Prostate gland (tissue), 2 donors: ENCODE measurements at regions of chr4 and their contacts with region 1.

Region 1: DNA sequence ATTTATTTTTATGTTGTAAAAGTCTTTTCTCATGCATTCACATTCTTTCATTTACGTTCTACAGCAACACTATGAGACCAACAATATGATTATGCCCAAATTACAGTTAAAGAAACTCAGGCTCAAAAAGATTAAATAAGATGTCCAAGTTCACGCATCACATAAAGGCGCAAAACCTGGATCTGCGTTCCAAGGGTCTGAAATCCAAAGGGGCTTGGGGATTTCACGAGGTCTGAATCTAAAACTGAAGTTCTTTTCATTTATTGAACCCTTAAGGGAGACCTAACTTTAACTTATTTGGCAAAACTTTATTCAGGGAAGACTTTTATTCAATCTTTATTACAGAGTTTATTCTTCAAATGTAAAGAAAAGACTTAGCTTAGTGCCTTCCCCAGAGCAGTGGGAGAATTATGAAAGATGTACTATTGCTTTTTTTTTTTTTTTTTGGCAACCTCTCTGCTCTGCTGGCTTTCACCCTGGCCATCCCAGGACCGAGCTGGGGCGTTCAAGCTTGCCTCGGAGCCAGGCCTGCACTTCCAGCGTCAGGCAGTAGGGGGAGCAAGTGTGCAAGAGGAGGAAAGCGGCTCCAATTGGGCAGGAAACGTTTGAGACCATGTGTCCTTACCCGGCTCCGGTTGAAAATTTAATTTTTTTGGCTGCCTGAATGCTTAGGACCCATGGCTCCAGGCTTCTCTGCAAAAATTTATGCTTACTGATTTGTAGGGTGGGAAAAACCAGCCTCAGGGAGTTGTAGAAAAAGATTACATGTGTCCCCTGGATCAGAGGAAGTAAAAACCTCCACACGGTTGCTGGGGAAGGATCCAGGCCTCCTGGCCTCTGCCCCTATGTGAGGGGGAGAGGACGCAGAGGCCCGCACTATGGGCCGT is 344.3 kb upstream of the KLF3 start:
- DNase-seq: peak; percentile 92
- H3K4me3 ChIP-seq: no peak overlapping the region
- H3K27ac ChIP-seq: peak overlapping the region; percentile 70 to 77
- H3K4me1 ChIP-seq: peaks cover 2% of the 10 kb centered on the region
- H3K27me3 ChIP-seq: no peaks in the 10 kb centered on the region
- CTCF ChIP-seq: peak; percentile 95 to 96 (median 96)
- POLR2A ChIP-seq: no peak

Region 2: DNA sequence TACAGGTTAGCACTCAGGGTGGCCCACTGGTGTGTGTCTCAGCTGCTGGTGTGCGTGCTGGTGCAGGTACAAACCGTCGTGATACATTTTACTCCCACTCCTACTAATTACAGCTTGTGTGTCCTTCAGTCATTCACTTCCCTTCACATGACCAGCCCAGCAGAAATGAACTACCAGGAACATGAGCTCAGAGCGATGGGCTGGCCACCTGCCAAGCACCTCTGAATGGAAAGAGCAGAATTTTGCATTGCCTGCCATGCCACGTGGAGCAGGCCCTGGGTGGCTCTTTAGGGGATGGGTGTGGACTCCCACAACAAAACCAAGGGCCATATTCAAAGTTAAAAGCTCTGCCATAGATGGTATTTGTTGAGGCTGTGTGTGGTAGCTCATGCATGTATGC is 552.2 kb before region 1 on chr4:
- intact Hi-C with region 1: no loop called
- DNase-seq: no peak
- H3K4me3 ChIP-seq: no peak overlapping the region
- H3K27ac ChIP-seq: no peak overlapping the region
- H3K4me1 ChIP-seq: no peaks in the 10 kb centered on the region
- H3K27me3 ChIP-seq: no peaks in the 10 kb centered on the region
- CTCF ChIP-seq: no peak
- POLR2A ChIP-seq: no peak

Region 3: GRCh38 chr4:38058151-38058550 is 261.5 kb before region 1 on chr4:
- intact Hi-C with region 1: no loop called
- DNase-seq: no peak
- H3K4me3 ChIP-seq: no peak overlapping the region
- H3K27ac ChIP-seq: no peak overlapping the region
- H3K4me1 ChIP-seq: no peaks in the 10 kb centered on the region
- H3K27me3 ChIP-seq: no peaks in the 10 kb centered on the region
- CTCF ChIP-seq: no peak
- POLR2A ChIP-seq: no peak

Region 4: DNA sequence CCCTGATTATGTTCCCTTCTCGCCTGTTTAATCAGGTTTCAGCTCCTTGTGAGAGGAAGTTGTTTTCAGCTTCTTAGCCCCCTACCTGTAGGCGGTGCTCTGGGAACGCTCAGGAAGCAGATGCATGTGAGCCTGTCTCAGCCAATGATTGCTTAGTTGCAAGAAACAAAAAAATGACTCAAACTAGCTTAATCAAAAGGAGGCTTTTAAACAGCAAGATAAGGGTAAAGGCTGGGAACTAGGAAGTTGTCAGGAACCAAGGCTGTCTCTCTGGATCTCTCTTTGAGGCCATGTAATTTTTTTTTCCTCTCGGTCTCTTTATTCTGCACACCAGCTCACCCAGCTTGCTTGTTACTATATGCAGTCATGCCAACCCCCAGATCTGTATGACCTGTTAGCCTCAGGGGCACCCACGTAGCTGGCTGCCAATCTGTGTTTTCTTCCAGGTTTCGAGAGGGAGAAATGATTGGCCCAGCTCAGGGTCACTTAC is 250.4 kb before region 1 on chr4:
- intact Hi-C with region 1: loop called (anchors 5 kb)
- DNase-seq: peak; percentile 60
- H3K4me3 ChIP-seq: no peak overlapping the region
- H3K27ac ChIP-seq: no peak overlapping the region
- H3K4me1 ChIP-seq: no peaks in the 10 kb centered on the region
- H3K27me3 ChIP-seq: no peaks in the 10 kb centered on the region
- CTCF ChIP-seq: peak in 3 of 4 experiments; percentile 26 to 83 (median 77)
- POLR2A ChIP-seq: no peak

Region 5: DNA sequence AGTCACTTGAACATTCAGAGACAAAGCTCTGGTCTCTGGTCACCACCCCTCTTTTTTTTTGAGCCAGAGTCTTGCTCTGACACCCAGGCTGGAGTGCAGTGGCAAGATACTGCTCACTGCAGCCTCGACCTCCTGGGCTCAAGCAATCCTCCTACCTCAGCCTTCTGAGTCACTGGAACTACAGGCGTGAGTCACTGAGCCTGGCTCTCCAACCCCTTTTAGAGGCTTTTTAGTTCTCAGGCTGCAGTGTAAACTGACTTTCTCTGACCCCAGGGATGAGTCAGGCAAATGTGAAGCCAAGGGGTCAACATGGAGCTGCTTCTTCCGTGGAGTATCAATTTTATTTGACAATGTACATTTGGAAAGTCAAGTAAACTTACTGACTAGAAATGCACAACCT is 130.3 kb before region 1 on chr4:
- intact Hi-C with region 1: loop called (anchors 5 kb)
- DNase-seq: no peak
- H3K4me3 ChIP-seq: no peak overlapping the region
- H3K27ac ChIP-seq: no peak overlapping the region
- H3K4me1 ChIP-seq: no peaks in the 10 kb centered on the region
- H3K27me3 ChIP-seq: no peaks in the 10 kb centered on the region
- CTCF ChIP-seq: no peak
- POLR2A ChIP-seq: no peak

Region 6: GRCh38 chr4:38730830-38731646 is 411.3 kb after region 1 on chr4:
- intact Hi-C with region 1: loop called (anchors 5 kb)
- DNase-seq: peak; percentile 73
- H3K4me3 ChIP-seq: no peak overlapping the region
- H3K27ac ChIP-seq: no peak overlapping the region
- H3K4me1 ChIP-seq: no peaks in the 10 kb centered on the region
- H3K27me3 ChIP-seq: no peaks in the 10 kb centered on the region
- CTCF ChIP-seq: peak; percentile 91 to 94 (median 92)
- POLR2A ChIP-seq: no peak